ENCODE measurements at regions of chr7 and their contacts with region 1.

Region 1: GRCh38 chr7:121081327-121081936 is 92.9 kb downstream of the CPED1 start:
- DNase-seq: no peak
- H3K4me3 ChIP-seq: no peak overlapping the region
- H3K27ac ChIP-seq: no peak overlapping the region
- H3K4me1 ChIP-seq: peaks cover 0 to 13% (median 2%) of the 10 kb centered on the region in 6 donors
- H3K27me3 ChIP-seq: no peaks in the 10 kb centered on the region
- CTCF ChIP-seq: peak; percentile 33 to 82 (median 71)
- POLR2A ChIP-seq: no peak

Region 2: DNA sequence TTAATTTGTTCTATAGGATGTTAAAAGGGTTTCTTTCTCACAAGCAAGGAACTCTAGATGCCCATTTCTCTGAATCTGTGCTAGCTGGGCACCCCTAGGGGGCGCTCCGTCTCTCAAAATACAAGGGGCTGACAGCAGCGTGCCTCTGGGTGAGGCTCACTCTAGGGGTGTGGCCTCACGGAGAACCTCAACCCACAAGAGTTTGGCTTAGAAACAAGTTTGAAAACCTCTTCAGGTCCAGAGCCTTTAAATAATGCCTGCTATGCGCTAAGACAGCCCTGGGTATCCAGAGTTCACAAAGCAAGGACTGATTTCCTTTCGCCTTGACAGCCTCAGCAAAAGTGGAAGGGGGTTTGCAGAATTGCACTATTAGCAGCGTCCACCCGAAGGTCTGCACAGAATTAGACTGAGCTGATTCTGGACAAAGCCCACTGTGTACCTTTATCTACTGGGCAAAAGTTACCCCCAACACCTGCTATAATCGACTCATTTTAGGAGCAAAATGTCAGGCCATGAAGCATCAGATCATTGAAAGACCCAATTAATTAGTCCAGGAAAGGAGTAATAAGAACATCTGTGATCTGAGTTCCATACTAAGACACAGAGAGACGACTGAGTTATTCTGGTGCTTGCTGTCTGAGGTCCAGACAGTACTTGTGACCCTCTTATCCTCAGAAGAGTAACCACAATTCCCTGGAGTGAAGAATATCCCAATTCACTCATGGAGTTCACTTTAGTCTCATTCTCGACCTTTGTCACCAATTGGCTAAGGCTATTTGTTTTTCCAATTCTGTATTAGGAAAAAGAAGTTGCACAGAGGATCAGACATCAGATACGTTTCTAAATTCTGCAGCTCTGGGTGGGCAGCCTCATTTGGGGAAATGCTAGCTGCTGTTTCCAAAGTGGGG is 93.5 kb before region 1 on chr7:
- intact Hi-C with region 1: loop called (anchors 5 kb)
- DNase-seq: peak; percentile 94
- H3K4me3 ChIP-seq: peak overlapping the region; percentile 19 to 68 (median 44)
- H3K27ac ChIP-seq: peak overlapping the region in 7 of 8 donors; percentile 79 to 87 (median 84)
- H3K4me1 ChIP-seq: peaks cover 8 to 45% (median 24%) of the 10 kb centered on the region in 6 donors
- H3K27me3 ChIP-seq: peaks cover 0 to 33% (median 5%) of the 10 kb centered on the region in 7 donors
- CTCF ChIP-seq: peak; percentile 46 to 96 (median 86)
- POLR2A ChIP-seq: no peak

Region 3: GRCh38 chr7:121041516-121042148 is 39.8 kb before region 1 on chr7:
- intact Hi-C with region 1: no loop called
- DNase-seq: no peak
- H3K4me3 ChIP-seq: no peak overlapping the region
- H3K27ac ChIP-seq: peak overlapping the region; percentile 43 to 70 (median 60)
- H3K4me1 ChIP-seq: peaks cover 0 to 18% (median 6%) of the 10 kb centered on the region in 6 donors
- H3K27me3 ChIP-seq: no peaks in the 10 kb centered on the region
- CTCF ChIP-seq: no peak
- POLR2A ChIP-seq: no peak

Region 4: GRCh38 chr7:121337398-121337797 is 256.0 kb after region 1 on chr7:
- intact Hi-C with region 1: no loop called
- DNase-seq: no peak
- H3K4me3 ChIP-seq: no peak overlapping the region
- H3K27ac ChIP-seq: no peak overlapping the region
- H3K4me1 ChIP-seq: no peaks in the 10 kb centered on the region
- H3K27me3 ChIP-seq: peaks cover 0 to 12% (median 6%) of the 10 kb centered on the region in 7 donors
- CTCF ChIP-seq: peak in 5 of 11 experiments; percentile 16 to 34 (median 18)
- POLR2A ChIP-seq: no peak